ENCODE measurements at regions of chr4 and their contacts with region 1.

Region 1: GRCh38 chr4:89420507-89420906 is 112.9 kb upstream of the GPRIN3 start:
- DNase-seq: no peak
- ATAC-seq: no peak
- H3K4me3 Mint-ChIP-seq: no peak overlapping the region
- H3K27ac Mint-ChIP-seq: no peak overlapping the region
- H3K4me1 Mint-ChIP-seq: peaks cover 4% of the 10 kb centered on the region
- H3K27me3 Mint-ChIP-seq: no peaks in the 10 kb centered on the region

Region 2: DNA sequence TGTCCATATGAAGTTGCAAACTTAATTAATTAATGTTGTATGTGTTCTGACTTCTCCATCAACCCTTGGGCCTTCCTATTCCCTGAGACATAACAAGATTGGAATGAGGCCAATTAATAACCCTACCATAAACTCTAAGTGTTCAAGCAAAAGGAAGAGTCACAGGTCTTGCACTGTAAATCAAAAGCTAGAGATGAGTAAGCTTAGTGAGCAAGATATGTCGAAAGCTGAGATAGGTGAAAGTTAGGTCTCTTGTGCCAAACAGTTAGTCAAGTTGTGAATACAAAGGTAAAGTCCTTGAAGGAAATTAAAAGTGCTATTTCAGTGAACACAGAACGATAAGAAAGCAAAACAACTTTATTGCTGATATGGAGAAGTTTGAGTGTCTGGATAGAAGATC is 54.7 kb before region 1 on chr4:
- CTCF ChIA-PET with region 1: no interaction called
- POLR2A ChIA-PET with region 1: no interaction called
- intact Hi-C with region 1: loop called in 1 of 2 experiments (anchors 1 kb)
- DNase-seq: no peak
- ATAC-seq: peak; percentile 96
- H3K4me3 Mint-ChIP-seq: no peak overlapping the region
- H3K27ac Mint-ChIP-seq: no peak overlapping the region
- H3K4me1 Mint-ChIP-seq: peaks cover 16% of the 10 kb centered on the region
- H3K27me3 Mint-ChIP-seq: no peaks in the 10 kb centered on the region

Region 3: DNA sequence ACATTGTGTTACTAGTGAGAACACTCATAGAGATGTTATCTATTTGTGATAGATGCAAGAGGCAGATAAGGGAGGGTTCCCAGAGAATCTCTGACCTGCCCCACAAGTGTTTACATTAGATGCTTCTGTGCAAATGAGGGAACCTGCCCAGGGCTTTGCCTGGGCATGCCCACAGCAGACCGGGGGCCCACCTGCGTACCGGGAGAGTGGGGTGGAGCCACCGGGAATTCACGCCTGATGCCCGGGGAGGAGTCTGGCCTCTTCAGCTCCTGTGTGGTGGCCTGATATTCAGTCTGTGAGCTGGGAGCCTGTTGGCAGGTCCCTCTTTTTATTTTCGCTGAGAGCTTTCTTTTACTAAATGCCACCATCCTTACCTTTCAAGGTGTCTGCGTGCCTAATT is 260.7 kb after region 1 on chr4:
- CTCF ChIA-PET with region 1: no interaction called
- POLR2A ChIA-PET with region 1: no interaction called
- intact Hi-C with region 1: no loop called
- DNase-seq: no peak
- ATAC-seq: no peak
- H3K4me3 Mint-ChIP-seq: no peak overlapping the region
- H3K27ac Mint-ChIP-seq: no peak overlapping the region
- H3K4me1 Mint-ChIP-seq: peaks cover 7% of the 10 kb centered on the region
- H3K27me3 Mint-ChIP-seq: peaks cover 5% of the 10 kb centered on the region